CD8-positive, alpha-beta memory T cell (primary cell): ENCODE measurements at regions of chr11 and their contacts with region 1.

Region 1: GRCh38 chr11:8832571-8833260 is 78.3 kb upstream of the AKIP1 start:
- DNase-seq: no peak
- H3K4me3 ChIP-seq: no peak overlapping the region
- H3K4me3 Mint-ChIP-seq: no peak overlapping the region
- H3K27ac ChIP-seq: no peak overlapping the region
- H3K27ac Mint-ChIP-seq: no peak overlapping the region
- H3K4me1 ChIP-seq: no peaks in the 10 kb centered on the region
- H3K4me1 Mint-ChIP-seq: no peaks in the 10 kb centered on the region
- H3K27me3 ChIP-seq: no peaks in the 10 kb centered on the region
- H3K27me3 Mint-ChIP-seq: peaks cover 5 to 14% of the 10 kb centered on the region in 2 donors

Region 2: DNA sequence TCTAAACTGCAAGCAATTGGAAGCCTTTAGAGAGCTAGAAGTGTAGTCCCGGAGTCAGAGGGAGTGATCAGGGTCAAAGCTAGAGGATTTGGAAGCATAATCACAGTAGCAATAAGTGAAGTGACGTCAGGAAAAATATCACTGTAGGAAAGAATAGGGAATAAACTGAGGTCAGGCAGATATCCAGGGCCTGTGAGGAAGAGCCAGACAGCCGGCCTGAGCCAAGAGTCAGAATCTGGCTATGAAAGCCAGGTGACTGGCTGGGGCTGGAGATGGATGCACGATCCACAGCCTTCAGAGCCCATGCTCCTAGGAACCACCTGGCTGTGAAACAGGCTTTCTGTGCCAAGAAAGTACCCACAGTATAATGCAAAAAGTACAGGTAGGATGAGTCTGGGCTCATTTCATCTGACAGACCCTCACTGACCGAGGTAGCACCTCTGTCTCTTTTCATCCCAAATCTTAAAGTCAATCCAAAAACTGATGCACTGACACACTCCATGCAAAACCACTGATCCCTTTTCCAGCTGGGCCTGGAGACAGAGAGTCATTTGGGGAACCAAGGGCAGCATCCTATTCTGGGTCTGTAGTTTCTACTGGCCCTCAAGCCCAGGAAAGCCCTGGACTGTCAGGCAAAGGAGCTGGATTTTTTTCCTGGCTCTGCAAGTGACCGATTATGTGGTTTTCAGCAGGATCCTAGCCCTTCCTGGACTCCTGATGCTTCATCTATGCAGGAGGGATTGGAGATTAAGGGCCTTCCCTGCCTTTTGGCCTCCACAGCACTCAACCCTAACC is 171.5 kb before region 1 on chr11:
- CTCF ChIA-PET with region 1: no interaction called
- POLR2A ChIA-PET with region 1: interaction called, 11 read pairs
- DNase-seq: no peak
- H3K4me3 ChIP-seq: no peak overlapping the region
- H3K4me3 Mint-ChIP-seq: no peak overlapping the region
- H3K27ac ChIP-seq: no peak overlapping the region
- H3K27ac Mint-ChIP-seq: peak overlapping the region in 1 of 8 donors; percentile 7
- H3K4me1 ChIP-seq: no peaks in the 10 kb centered on the region
- H3K4me1 Mint-ChIP-seq: no peaks in the 10 kb centered on the region
- H3K27me3 ChIP-seq: no peaks in the 10 kb centered on the region
- H3K27me3 Mint-ChIP-seq: no peaks in the 10 kb centered on the region

Region 3: DNA sequence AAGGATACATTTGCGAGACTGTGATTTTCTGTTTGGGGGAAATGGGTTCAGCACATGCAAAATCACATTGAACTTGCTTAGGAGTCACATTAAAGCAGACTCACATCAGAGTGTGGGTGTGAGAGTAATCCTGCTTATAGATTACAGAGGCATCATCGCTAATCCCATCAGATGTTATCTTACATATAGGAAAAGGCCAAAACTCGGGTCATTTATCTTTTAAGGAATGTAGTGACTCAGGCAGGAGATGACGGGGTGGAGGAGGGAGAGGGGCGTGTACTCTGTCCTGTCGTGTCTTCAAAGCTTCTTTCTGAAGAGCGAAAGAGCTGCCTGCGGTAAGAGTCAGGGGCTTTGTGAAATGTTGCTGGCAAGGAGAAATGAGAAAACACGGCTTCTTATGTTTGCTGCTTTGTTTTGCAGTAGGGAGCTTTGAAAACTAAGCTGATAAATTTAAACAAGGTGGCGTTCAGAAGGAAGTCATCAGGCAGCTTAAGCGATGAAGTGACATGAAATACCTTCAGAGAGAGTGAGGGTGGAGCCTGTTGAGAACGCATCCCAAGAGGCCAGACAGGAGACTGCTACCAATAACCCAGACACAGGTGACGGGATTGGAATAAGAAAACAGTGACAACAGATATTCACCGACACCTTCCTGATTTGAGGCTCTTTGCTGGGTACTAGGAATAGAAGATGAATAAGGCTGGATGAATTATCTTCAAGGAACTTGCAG is 102.2 kb after region 1 on chr11:
- CTCF ChIA-PET with region 1: no interaction called
- POLR2A ChIA-PET with region 1: no interaction called
- DNase-seq: no peak
- H3K4me3 ChIP-seq: no peak overlapping the region
- H3K4me3 Mint-ChIP-seq: peak overlapping the region in 1 of 7 donors; percentile 2
- H3K27ac ChIP-seq: no peak overlapping the region
- H3K27ac Mint-ChIP-seq: peak overlapping the region in 2 of 8 donors; percentile 6 to 51
- H3K4me1 ChIP-seq: no peaks in the 10 kb centered on the region
- H3K4me1 Mint-ChIP-seq: no peaks in the 10 kb centered on the region
- H3K27me3 ChIP-seq: no peaks in the 10 kb centered on the region
- H3K27me3 Mint-ChIP-seq: peaks cover 4 to 7% of the 10 kb centered on the region in 2 donors